ENCODE measurements at regions of chr9 and their contacts with region 1.

Region 1: GRCh38 chr9:135056541-135056940 is 30.9 kb upstream of the OLFM1 start:
- DNase-seq: no peak
- H3K4me3 ChIP-seq: no peak overlapping the region
- H3K27ac ChIP-seq: no peak overlapping the region
- H3K4me1 ChIP-seq: no peaks in the 10 kb centered on the region
- H3K27me3 ChIP-seq: peaks cover 0 to 11% of the 10 kb centered on the region in 2 donors
- CTCF ChIP-seq: no peak
- POLR2A ChIP-seq: no peak

Region 2: DNA sequence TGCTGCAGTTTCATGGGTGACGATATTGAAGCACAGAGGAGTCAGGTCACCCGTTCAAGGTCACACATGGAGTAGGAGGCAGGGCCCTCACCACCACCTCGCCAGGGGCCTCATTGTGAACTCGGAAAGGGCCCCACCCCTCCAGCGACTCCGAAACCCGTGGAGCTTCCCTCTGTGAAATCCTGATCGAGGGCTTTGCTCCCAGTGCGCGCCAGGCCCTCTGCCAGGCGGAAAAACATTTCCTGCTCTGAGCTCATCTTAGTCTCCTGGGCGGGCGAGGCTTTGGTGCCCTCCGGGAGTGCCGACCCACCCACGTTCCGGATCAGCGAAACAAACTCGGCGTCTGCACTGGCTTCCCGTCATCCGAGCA is 63.8 kb before region 1 on chr9:
- intact Hi-C with region 1: no loop called
- DNase-seq: peak; percentile 70 to 84
- H3K4me3 ChIP-seq: peak overlapping the region in 2 of 3 donors; percentile 30 to 63
- H3K27ac ChIP-seq: peak overlapping the region; percentile 60 to 83
- H3K4me1 ChIP-seq: no peaks in the 10 kb centered on the region
- H3K27me3 ChIP-seq: no peaks in the 10 kb centered on the region
- CTCF ChIP-seq: no peak
- POLR2A ChIP-seq: no peak

Region 3: DNA sequence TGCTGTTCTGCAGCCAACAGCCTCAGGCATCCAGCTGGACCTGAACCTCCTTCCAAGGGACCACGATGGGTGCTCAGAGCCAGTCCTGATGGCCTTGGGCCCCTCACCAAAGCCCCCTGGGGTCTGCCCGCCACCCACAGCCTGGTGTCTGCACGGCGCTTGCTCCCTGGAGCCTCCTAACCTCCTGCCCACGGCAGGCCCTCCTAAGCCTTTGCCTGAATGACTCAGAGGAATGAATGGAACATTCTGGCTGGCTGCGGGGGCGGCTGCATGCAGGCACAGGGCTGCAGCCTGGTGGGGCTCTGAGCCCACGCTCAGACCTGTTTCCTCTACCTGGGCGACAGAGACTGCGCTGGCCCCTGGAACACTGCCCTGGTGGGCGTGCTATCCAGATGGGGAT is 635.9 kb after region 1 on chr9:
- intact Hi-C with region 1: loop called (anchors 5 kb)
- DNase-seq: no peak
- H3K4me3 ChIP-seq: no peak overlapping the region
- H3K27ac ChIP-seq: no peak overlapping the region
- H3K4me1 ChIP-seq: no peaks in the 10 kb centered on the region
- H3K27me3 ChIP-seq: peaks cover 0 to 46% of the 10 kb centered on the region in 2 donors
- CTCF ChIP-seq: no peak
- POLR2A ChIP-seq: no peak

Measured in breast epithelium (tissue), 4 donors.